Activated CD4-positive, alpha-beta T cell treated with anti-CD3 and anti-CD28 coated beads for 36 hours (primary cell): ENCODE measurements at regions of chr2 and their contacts with region 1.

Region 1: DNA sequence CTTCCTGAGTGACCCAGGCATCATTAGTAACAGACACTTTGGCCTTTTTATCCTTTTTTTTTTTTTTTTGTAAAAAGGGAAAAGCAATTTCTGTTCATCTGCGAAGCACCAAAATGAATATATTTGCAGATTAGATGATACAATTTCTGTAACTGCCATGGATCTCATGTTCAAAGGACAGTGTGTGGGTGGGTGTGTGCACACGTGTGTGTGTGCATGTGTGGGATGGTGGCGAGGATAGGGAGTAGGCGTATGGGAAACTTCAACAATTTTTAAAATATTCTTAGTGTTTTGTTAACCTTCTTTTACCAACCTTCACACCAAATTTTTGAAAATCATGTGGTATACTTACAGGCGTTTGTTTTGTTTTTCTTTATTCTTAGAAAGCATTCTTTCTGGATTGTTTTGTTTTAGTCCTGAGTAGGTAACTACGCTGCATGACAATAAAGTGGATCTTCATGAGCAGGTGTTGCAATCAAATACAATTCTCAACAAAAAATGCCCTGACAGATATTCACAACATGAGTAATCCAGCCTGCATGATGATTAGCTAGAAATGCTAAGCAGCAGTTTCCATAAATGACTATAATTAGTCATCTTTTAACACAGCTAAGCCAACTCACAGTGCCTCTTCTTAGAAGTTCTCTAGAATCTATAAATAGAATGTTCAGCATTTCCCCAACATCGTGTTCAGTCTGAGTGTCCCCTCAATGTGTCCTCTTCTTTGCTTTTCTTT is 53.5 kb upstream of the RMDN2 start:
- DNase-seq: no peak
- ATAC-seq: peak; percentile 92
- H3K4me3 Mint-ChIP-seq: peak overlapping the region; percentile 49
- H3K27ac Mint-ChIP-seq: peak overlapping the region; percentile 93
- H3K4me1 Mint-ChIP-seq: peaks cover 37% of the 10 kb centered on the region
- H3K27me3 Mint-ChIP-seq: peaks cover 7% of the 10 kb centered on the region

Region 2: DNA sequence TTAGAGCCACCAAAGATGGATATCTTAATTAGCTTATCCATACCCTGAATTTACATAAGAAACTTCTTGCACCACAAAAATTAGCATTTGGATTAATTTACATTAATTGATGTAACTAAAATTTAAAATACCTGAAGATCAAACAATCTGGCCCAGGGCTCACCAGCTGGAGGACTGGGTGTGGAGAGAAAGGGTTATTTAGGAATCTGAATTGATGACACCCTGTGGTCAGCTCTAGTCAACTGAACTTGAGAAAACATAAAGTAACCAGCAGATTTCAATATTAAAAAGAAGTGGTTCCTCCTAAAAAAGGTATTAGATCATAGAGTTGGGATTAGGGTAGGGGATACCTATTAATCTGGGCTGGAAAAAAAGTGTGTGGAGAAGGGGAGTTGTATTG is 1027.8 kb before region 1 on chr2:
- CTCF ChIA-PET with region 1: no interaction called
- POLR2A ChIA-PET with region 1: no interaction called
- intact Hi-C with region 1: no loop called
- DNase-seq: no peak
- ATAC-seq: no peak
- H3K4me3 Mint-ChIP-seq: no peak overlapping the region
- H3K27ac Mint-ChIP-seq: no peak overlapping the region
- H3K4me1 Mint-ChIP-seq: no peaks in the 10 kb centered on the region
- H3K27me3 Mint-ChIP-seq: no peaks in the 10 kb centered on the region

Region 3: DNA sequence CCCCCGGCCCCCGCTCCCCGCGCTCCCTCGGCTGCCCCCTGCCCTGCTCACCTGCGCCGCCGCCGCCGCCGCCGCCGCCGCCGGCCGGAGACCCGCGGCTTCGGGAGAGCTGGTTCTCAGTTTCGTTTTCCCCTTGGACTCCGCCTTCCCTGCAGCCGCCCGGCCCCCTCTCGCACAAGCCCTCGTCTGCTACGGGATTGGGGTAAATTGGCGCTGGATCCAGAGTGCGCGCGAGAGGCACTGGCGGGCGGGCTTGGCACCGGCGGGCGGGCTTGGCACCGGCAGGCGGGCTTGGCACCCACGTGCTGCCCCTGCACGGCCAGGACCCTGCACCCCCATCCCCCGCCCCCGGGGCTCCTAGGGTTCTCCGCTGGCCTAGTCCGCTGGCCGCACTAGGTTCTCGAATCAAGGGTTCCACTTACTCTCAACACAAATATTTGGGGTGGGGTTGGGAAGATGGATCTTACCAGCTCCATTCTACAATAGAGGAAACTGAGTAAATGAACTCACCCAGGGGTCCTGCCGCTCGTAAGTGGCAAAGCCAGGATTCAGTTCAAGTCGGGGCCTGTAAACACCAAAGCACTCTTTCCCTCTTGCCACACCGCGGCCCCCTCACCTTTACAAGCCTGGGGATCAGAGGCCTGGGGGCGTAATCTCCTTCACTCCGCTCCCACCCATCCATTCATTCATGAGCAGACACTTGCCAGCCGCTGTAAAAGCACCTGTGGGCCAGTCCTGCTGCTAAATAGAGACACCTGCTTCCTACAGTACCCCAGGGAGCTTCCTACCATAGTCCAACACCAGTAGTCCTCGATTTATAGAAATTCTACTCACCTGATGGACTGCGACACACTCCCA is 714.5 kb before region 1 on chr2 and contains the start of gene EIF2AK2:
- CTCF ChIA-PET with region 1: no interaction called
- POLR2A ChIA-PET with region 1: no interaction called
- intact Hi-C with region 1: loop called (anchors 5 to 10 kb)
- DNase-seq: peak; percentile 89
- ATAC-seq: peak; percentile 93
- H3K4me3 Mint-ChIP-seq: peak within 1 kb of the TSS; percentile 85
- H3K27ac Mint-ChIP-seq: peak within 1 kb of the TSS; percentile 89
- H3K4me1 Mint-ChIP-seq: peaks cover 40% of the 10 kb centered on the region
- H3K27me3 Mint-ChIP-seq: no peaks in the 10 kb centered on the region
- total RNA-seq, gene EIF2AK2: 66.4 to 70.6 TPM

Region 4: DNA sequence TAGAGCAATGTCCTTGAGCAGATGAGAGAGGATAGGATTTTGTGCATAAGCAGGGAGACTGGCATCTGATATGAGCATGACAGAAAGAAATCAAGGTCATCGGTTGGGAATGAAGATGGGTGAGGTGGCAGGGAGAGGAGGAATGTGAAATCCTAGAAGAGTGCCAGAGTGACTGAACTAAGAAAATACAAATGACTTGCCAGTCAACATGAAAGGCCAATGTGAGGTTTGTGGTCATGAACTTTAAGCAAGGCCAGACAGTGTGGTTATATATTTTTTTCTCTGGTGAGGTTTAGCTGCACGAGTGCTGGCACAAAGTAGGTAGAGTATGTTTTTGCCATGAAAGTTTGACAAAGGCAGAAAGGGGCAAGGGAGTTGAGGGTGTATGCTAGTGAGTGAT is 506.0 kb before region 1 on chr2:
- CTCF ChIA-PET with region 1: no interaction called
- POLR2A ChIA-PET with region 1: no interaction called
- intact Hi-C with region 1: loop called in 1 of 2 experiments (anchors 2 kb)
- DNase-seq: peak; percentile 28
- ATAC-seq: peak; percentile 66
- H3K4me3 Mint-ChIP-seq: no peak overlapping the region
- H3K27ac Mint-ChIP-seq: no peak overlapping the region
- H3K4me1 Mint-ChIP-seq: no peaks in the 10 kb centered on the region
- H3K27me3 Mint-ChIP-seq: peaks cover 33% of the 10 kb centered on the region

Region 5: GRCh38 chr2:37585982-37586621 is 285.5 kb before region 1 on chr2:
- CTCF ChIA-PET with region 1: interaction called, 6 read pairs
- POLR2A ChIA-PET with region 1: no interaction called
- intact Hi-C with region 1: loop called in 1 of 2 experiments (anchors 1 kb)
- DNase-seq: peak; percentile 83
- ATAC-seq: peak; percentile 85
- H3K4me3 Mint-ChIP-seq: peak overlapping the region; percentile 22
- H3K27ac Mint-ChIP-seq: peak overlapping the region; percentile 52
- H3K4me1 Mint-ChIP-seq: peaks cover 90% of the 10 kb centered on the region
- H3K27me3 Mint-ChIP-seq: no peaks in the 10 kb centered on the region

Region 6: GRCh38 chr2:37635504-37636380 is 235.9 kb before region 1 on chr2:
- CTCF ChIA-PET with region 1: interaction called, 4 read pairs
- POLR2A ChIA-PET with region 1: no interaction called
- intact Hi-C with region 1: loop called (anchors 1 kb)
- DNase-seq: peak; percentile 85
- ATAC-seq: peak; percentile 85
- H3K4me3 Mint-ChIP-seq: peak overlapping the region; percentile 33
- H3K27ac Mint-ChIP-seq: peak overlapping the region; percentile 83
- H3K4me1 Mint-ChIP-seq: peaks cover 65% of the 10 kb centered on the region
- H3K27me3 Mint-ChIP-seq: no peaks in the 10 kb centered on the region

Region 7: GRCh38 chr2:37832590-37833197 is 38.9 kb before region 1 on chr2:
- CTCF ChIA-PET with region 1: interaction called, 59 read pairs
- POLR2A ChIA-PET with region 1: no interaction called
- intact Hi-C with region 1: loop called (anchors 1 kb)
- DNase-seq: peak; percentile 90
- ATAC-seq: peak; percentile 76
- H3K4me3 Mint-ChIP-seq: no peak overlapping the region
- H3K27ac Mint-ChIP-seq: peak overlapping the region; percentile 32
- H3K4me1 Mint-ChIP-seq: peaks cover 22% of the 10 kb centered on the region
- H3K27me3 Mint-ChIP-seq: no peaks in the 10 kb centered on the region

Region 8: GRCh38 chr2:38330754-38331153 is 459.1 kb after region 1 on chr2:
- CTCF ChIA-PET with region 1: no interaction called
- POLR2A ChIA-PET with region 1: no interaction called
- intact Hi-C with region 1: no loop called
- DNase-seq: no peak
- ATAC-seq: no peak
- H3K4me3 Mint-ChIP-seq: no peak overlapping the region
- H3K27ac Mint-ChIP-seq: no peak overlapping the region
- H3K4me1 Mint-ChIP-seq: peaks cover 26% of the 10 kb centered on the region
- H3K27me3 Mint-ChIP-seq: no peaks in the 10 kb centered on the region